Activated T-helper 2 cell treated with anti-CD3 and anti-CD28 coated beads, Interferon-gamma antibody, Interleukin-2, Interleukin-4, amounts not matched to agents 10 μg/mL and 5 μg/mL and 100 μg/mL, durations not matched to agents 14 hours and 24 hours and 36 hours (primary cell): ENCODE measurements at regions of chr2 and their contacts with region 1.

Region 1: DNA sequence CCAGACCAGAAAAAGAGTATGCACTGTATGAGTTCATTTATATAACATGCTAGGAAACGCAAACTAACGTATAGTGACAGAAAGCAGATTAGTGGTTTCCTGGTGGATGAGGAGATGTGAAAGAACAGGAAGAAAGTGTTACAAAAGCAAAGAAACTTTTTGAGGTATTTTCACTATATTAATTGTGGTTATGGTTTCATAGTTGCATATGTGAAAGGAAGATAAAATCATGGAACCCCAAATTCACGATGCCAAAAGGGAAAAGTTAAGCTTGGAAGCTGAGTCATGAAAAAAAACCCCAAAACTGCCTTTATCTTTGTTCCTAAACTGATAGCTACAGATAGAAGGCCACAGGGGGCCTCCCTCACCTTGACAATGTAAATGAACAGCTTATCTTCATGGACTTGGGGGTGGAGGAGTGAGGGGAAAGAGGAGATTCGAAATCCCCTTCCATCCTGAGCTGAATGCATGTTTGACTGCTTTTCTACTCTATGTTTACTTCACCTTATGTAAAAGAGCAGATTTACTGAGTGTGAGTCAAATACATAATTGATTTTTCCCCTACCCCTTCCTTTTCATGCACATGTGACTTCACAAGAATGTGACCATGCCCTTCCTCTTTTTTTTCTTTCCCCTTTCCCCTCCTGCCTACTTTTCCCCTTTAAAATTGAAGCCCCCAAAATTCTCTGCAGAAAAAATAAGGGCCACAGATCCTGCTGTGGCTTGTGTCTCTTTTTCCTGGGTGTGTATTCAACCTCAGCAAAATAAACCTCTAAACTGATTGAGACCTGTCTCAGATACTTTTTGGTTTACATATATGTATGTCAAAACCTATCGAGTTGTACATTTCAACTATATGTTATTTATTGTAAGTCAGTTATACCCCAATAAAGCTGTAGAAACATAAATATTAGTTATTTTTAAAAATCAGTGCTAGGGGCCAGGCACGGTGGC is 100.1 kb upstream of the TLK1 start:
- DNase-seq: no peak
- H3K4me3 Mint-ChIP-seq: no peak overlapping the region
- H3K27ac Mint-ChIP-seq: peak overlapping the region; percentile 51
- H3K4me1 Mint-ChIP-seq: peaks cover 33% of the 10 kb centered on the region
- H3K27me3 Mint-ChIP-seq: peaks cover 2% of the 10 kb centered on the region

Region 2: GRCh38 chr2:171136024-171136423 is 124.7 kb before region 1 on chr2:
- intact Hi-C with region 1: loop called (anchors 1 kb)
- DNase-seq: no peak
- H3K4me3 Mint-ChIP-seq: peak overlapping the region; percentile 44
- H3K27ac Mint-ChIP-seq: peak overlapping the region; percentile 94
- H3K4me1 Mint-ChIP-seq: peaks cover 23% of the 10 kb centered on the region
- H3K27me3 Mint-ChIP-seq: no peaks in the 10 kb centered on the region

Region 3: DNA sequence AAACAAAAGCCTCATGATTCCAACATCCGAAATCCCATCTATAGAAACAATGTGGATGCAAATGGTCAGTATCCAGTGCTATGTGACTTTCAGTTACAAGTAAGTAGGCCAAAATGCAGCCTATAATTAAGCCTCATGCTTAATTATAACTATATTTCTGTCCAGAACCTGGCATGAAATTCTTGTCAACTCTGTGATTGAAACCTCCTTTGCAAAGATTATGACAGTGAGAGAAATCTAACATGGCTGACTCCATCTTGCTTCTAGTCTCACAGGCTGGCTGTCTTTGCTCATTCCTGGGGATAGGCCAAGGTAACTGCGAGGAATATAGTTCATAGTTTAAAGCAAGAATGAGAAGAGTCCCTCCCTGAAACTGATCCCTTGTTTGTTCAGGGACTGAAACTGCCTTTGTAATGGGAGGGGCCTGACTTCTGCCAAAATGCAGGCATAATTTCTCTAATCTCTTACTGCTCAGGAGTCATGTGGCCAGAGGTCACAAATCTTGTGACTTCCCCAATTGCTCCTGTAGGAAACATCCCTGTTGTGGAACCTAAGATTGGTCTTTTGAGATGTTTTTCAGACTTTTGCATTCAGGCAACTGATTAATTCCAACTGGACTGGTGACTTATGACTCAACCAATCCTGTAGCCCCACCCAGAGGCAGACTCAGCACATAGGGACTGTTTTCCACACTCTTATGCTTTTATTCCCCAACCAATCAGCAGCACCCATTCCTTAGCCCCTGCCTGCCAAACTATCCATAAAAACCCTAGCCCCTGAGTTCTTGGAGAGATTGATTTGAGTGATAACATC is 15.6 kb before region 1 on chr2:
- intact Hi-C with region 1: loop called (anchors 1 kb)
- DNase-seq: no peak
- H3K4me3 Mint-ChIP-seq: no peak overlapping the region
- H3K27ac Mint-ChIP-seq: no peak overlapping the region
- H3K4me1 Mint-ChIP-seq: peaks cover 40% of the 10 kb centered on the region
- H3K27me3 Mint-ChIP-seq: peaks cover 3% of the 10 kb centered on the region

Region 4: DNA sequence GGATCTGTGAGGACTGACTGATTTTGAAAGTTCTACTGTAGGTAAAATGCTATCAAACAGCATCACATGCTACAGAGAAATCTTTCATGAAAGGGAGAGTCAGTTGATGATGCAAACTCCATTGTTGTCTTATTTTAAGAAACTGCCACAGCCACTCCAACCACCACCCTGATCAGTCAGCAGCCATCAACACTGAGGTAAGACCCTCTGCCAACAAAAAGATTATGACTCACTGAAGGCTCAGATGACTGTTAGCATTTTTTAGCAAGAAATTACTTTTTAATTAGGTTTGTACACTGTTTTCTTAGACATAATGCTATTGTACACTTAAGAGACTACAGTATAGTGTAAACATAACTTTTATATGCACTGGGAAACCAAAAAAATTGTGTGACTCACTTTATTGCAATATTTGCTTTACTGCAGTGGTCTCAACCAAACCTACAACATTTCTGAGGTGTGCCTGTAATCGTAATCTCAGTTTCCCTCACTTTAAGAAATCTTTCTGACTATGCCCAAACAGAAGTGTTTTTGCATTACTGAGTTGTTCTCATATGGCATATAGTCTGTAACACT is 130.3 kb after region 1 on chr2:
- intact Hi-C with region 1: loop called (anchors 1 kb)
- DNase-seq: peak; percentile 22
- H3K4me3 Mint-ChIP-seq: no peak overlapping the region
- H3K27ac Mint-ChIP-seq: peak overlapping the region; percentile 77
- H3K4me1 Mint-ChIP-seq: peaks cover 39% of the 10 kb centered on the region
- H3K27me3 Mint-ChIP-seq: no peaks in the 10 kb centered on the region

Region 5: GRCh38 chr2:171741189-171741588 is 480.4 kb after region 1 on chr2:
- intact Hi-C with region 1: no loop called
- DNase-seq: no peak
- H3K4me3 Mint-ChIP-seq: no peak overlapping the region
- H3K27ac Mint-ChIP-seq: no peak overlapping the region
- H3K4me1 Mint-ChIP-seq: peaks cover 12% of the 10 kb centered on the region
- H3K27me3 Mint-ChIP-seq: no peaks in the 10 kb centered on the region